ENCODE measurements at regions of chr11 and their contacts with region 1.

Region 1: GRCh38 chr11:100575870-100576705 is 111.0 kb upstream of the ARHGAP42 start:
- DNase-seq: no peak
- ATAC-seq: peak; percentile 85

Region 2: DNA sequence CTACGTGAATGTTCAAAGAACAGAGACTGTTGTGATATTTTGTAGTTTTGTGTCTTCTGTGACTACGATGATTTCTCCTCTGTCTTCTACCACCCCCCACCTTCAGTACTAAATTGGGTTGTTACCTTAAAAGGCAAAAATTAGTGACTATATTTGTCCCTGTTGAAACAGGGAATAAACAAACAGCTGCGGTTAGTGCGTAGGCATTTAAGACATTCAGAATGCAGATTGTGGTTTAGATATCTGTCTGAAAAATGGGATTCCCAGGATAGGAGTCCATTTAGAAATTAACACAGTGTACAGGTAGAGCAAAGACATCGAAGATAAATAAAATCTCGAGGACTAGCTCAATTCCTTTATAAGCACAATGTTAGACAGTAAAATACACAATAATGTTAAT is 95.4 kb after region 1 on chr11:
- intact Hi-C with region 1: no loop called
- DNase-seq: no peak
- ATAC-seq: no peak

Region 3: DNA sequence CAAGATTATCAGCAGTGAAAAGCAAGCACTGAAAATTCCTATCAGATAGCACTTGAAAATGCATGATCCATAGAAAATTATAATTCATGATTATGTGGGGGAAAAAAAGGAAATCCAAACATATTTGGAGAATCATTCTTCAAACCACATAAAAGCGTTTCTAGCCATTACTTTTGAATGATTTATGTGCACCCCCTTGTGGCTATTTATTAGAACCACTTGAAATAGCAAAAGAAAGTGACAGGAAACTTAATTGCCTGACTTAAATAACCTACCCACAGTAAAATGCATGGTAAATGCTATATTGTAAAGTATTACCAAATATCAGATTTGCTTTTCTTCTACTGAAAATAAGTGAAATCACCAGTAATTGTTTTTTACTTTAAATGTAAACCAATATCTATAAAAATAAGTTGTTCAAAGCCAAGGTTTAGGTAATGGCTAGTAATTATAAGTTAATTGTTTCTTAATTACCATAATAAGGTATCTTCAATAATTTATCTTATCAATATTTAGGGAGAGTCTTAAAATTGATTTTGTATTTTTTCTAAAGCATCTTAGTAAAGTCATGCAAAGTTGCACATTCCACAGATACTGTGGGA is 279.5 kb after region 1 on chr11:
- intact Hi-C with region 1: loop called in 1 of 2 experiments (anchors 5 kb)
- DNase-seq: no peak
- ATAC-seq: peak; percentile 50

Region 4: GRCh38 chr11:100930185-100930778 is 354.2 kb after region 1 on chr11:
- intact Hi-C with region 1: loop called in 1 of 2 experiments (anchors 5 kb)
- DNase-seq: no peak
- ATAC-seq: peak; percentile 67